ENCODE measurements at regions of chr2 and their contacts with region 1.

Region 1: DNA sequence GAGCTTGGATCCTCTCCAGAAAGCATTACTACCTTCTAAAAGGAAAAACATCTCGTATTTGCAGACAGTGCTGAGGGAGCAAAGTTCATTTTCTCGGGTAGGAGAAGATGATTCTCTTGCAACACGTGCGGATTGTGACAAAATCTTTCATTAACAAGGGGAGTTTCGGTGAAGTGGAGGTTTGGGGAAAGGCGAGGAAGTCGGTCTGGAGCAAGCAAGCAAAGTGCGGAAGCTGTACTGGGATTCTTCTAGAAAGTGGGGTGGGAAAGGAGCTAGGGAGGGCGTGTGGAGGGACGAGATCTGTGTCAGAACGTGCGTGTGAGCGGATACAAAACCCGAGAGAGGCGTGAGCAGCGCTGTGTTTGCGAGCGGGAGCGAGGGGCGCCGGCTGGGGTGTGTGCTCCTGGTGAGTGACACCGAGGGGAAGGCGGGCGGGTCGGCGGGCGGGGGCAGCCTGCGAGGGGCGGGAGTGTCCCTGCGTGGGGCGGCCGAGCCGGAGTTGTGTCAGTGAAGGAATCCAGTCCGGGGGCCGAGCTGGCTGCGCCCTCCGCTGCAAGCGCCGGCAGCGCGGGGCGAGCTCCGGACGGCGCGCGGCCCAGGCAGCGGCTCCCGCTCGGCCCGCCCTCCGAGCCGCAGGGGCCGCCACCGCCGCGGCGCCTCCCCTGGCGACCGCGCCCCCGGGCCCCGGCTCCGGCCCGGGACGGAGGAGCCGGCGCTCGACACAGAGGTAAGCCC is at the start of gene SPATS2L:
- DNase-seq: peak; percentile 85 to 86
- ATAC-seq: peak; percentile 75 to 94 (median 89)
- H3K4me3 ChIP-seq: peak within 1 kb of the TSS; percentile 76 to 95 (median 91)
- H3K27ac ChIP-seq: peak within 1 kb of the TSS; percentile 90 to 97 (median 94)
- H3K4me1 ChIP-seq: peaks cover 0 to 49% (median 31%) of the 10 kb centered on the region in 9 donors
- H3K27me3 ChIP-seq: no peaks in the 10 kb centered on the region
- CTCF ChIP-seq: no peak
- total RNA-seq, gene SPATS2L: 48.4 to 104 (median 73.5) TPM

Region 2: GRCh38 chr2:199979832-199980628 is 326.3 kb before region 1 on chr2:
- intact Hi-C with region 1: loop called in 9 of 10 experiments (anchors 2 to 10 kb)
- DNase-seq: peak; percentile 84 to 87
- ATAC-seq: peak; percentile 37 to 84 (median 74)
- H3K4me3 ChIP-seq: peak overlapping the region in 6 of 10 donors; percentile 6 to 33 (median 24)
- H3K27ac ChIP-seq: no peak overlapping the region
- H3K4me1 ChIP-seq: peaks cover 0 to 12% (median 4%) of the 10 kb centered on the region in 9 donors
- H3K27me3 ChIP-seq: no peaks in the 10 kb centered on the region
- CTCF ChIP-seq: peak; percentile 69 to 92 (median 91)

Region 3: GRCh38 chr2:200373973-200374416 is 67.6 kb after region 1 on chr2:
- intact Hi-C with region 1: loop called in 2 of 10 experiments (anchors 5 to 10 kb)
- DNase-seq: no peak
- ATAC-seq: no peak
- H3K4me3 ChIP-seq: peak overlapping the region in 1 of 10 donors; percentile 24
- H3K27ac ChIP-seq: peak overlapping the region in 1 of 10 donors; percentile 59
- H3K4me1 ChIP-seq: peaks cover 5 to 66% (median 51%) of the 10 kb centered on the region in 9 donors
- H3K27me3 ChIP-seq: no peaks in the 10 kb centered on the region
- CTCF ChIP-seq: no peak

Region 4: GRCh38 chr2:200405599-200406298 is 99.4 kb after region 1 on chr2:
- intact Hi-C with region 1: loop called in 1 of 10 experiments (anchors 10 kb)
- DNase-seq: no peak
- ATAC-seq: peak in 7 of 8 donors; percentile 26 to 91 (median 63)
- H3K4me3 ChIP-seq: no peak overlapping the region
- H3K27ac ChIP-seq: peak overlapping the region in 6 of 10 donors; percentile 7 to 73 (median 50)
- H3K4me1 ChIP-seq: peaks cover 0 to 56% (median 30%) of the 10 kb centered on the region in 9 donors
- H3K27me3 ChIP-seq: no peaks in the 10 kb centered on the region
- CTCF ChIP-seq: no peak

Region 5: GRCh38 chr2:200454927-200455801 is 148.8 kb after region 1 on chr2:
- intact Hi-C with region 1: loop called in 1 of 10 experiments (anchors 10 kb)
- DNase-seq: no peak
- ATAC-seq: peak in 7 of 8 donors; percentile 5 to 80 (median 46)
- H3K4me3 ChIP-seq: no peak overlapping the region
- H3K27ac ChIP-seq: peak overlapping the region in 2 of 10 donors; percentile 26 to 38
- H3K4me1 ChIP-seq: peaks cover 0 to 26% (median 12%) of the 10 kb centered on the region in 9 donors
- H3K27me3 ChIP-seq: no peaks in the 10 kb centered on the region
- CTCF ChIP-seq: no peak

Region 6: DNA sequence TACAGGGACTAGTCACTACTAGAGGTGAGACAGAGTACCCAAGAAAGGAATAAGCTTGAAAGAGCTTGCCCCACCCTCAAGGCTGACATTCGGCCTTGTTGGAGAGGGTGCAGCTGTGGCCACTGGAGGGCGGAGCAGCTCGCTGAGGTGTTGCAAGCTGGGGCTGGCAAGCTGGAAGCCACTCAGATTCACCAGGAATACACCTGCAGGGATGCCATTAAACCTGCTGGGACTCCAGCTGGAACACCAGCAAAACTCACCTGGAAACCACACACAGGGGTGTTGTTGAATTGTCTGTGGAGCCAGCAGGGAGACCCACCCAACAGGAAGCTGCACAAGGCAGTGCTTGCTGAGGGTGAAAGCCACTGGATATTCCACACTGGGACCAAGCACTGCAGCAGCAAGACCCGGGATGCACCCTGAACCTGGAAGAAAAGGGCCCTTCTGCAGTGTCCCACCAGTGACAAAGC is 177.4 kb after region 1 on chr2:
- intact Hi-C with region 1: loop called in 6 of 10 experiments (anchors 5 to 10 kb)
- DNase-seq: no peak
- ATAC-seq: peak in 2 of 8 donors; percentile 29 to 36
- H3K4me3 ChIP-seq: no peak overlapping the region
- H3K27ac ChIP-seq: no peak overlapping the region
- H3K4me1 ChIP-seq: peaks cover 0 to 5% (median 0%) of the 10 kb centered on the region in 9 donors
- H3K27me3 ChIP-seq: no peaks in the 10 kb centered on the region
- CTCF ChIP-seq: peak in 7 of 9 donors; percentile 12 to 47 (median 28)

Measured in heart right ventricle (tissue), 16 donors.